Right cardiac atrium (tissue), 5 donors: ENCODE measurements at regions of chr5 and their contacts with region 1.

Region 1: DNA sequence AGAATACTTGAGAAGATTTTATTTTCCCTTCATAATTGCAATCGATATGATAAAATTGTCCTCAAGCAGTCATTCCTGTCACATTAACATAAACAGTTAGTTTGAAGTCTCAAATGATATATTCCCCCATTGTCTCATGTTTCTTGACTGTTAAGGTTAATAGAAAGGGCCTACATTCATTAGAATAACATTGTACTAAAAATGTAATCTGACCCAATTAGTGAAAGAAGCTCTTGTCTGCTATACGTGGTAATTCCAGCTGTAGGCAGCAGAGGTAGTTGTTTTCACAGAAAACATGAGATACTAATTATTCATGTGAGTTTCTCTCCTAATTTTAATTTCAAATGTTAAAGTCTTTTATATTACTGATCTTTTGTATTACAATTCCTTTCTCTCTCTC is 25.9 kb upstream of the AP3B1 start:
- DNase-seq: no peak
- ATAC-seq: no peak
- H3K4me3 ChIP-seq: no peak overlapping the region
- H3K27ac ChIP-seq: no peak overlapping the region
- H3K4me1 ChIP-seq: no peaks in the 10 kb centered on the region
- H3K27me3 ChIP-seq: no peaks in the 10 kb centered on the region

Region 2: GRCh38 chr5:77718934-77719610 is 601.3 kb before region 1 on chr5:
- intact Hi-C with region 1: no loop called
- DNase-seq: no peak
- ATAC-seq: no peak
- H3K4me3 ChIP-seq: no peak overlapping the region
- H3K27ac ChIP-seq: no peak overlapping the region
- H3K4me1 ChIP-seq: no peaks in the 10 kb centered on the region
- H3K27me3 ChIP-seq: no peaks in the 10 kb centered on the region

Region 3: GRCh38 chr5:78537821-78538220 is 217.4 kb after region 1 on chr5:
- intact Hi-C with region 1: loop called in 1 of 4 experiments (anchors 10 kb)
- DNase-seq: no peak
- ATAC-seq: peak; percentile 71 to 73
- H3K4me3 ChIP-seq: no peak overlapping the region
- H3K27ac ChIP-seq: no peak overlapping the region
- H3K4me1 ChIP-seq: peaks cover 9% of the 10 kb centered on the region
- H3K27me3 ChIP-seq: no peaks in the 10 kb centered on the region

Region 4: DNA sequence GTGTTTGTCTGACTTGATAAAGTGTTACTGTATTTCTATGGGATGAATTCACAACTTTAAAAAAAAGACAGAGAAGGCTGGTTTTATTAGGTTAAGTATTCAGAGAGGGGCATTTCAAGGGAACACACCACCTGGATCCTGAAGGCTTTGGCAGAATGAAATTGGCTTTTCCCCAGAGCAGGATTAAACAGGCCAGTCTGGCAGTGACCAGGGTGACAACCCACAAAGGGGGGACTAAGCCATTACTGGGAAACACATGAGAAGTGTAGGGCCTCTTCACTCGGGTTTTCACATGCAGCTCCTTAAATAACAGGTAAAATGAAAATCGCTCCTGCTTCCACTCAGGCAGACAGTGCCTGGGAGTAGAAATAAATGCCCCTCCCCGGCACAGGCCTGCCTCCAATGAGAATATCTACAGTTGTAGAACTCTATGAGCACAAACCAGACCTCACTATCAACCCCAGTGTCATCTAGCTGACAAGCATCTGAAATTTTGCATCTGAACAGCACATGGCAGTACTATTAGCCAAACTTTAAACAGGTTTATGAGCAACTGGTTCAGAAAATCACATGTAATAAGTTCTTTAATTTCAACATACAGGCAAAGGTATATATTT is 242.4 kb after region 1 on chr5:
- intact Hi-C with region 1: no loop called
- DNase-seq: no peak
- ATAC-seq: no peak
- H3K4me3 ChIP-seq: no peak overlapping the region
- H3K27ac ChIP-seq: no peak overlapping the region
- H3K4me1 ChIP-seq: no peaks in the 10 kb centered on the region
- H3K27me3 ChIP-seq: no peaks in the 10 kb centered on the region